Activated CD4-positive, alpha-beta memory T cell treated with anti-CD3 and anti-CD28 coated beads for 36 hours (primary cell): ENCODE measurements at regions of chr3 and their contacts with region 1.

Region 1: GRCh38 chr3:130746246-130747039 is at the start of gene PIK3R4:
- DNase-seq: peak; percentile 96
- H3K4me3 Mint-ChIP-seq: peak within 1 kb of the TSS; percentile 81
- H3K27ac Mint-ChIP-seq: peak within 1 kb of the TSS; percentile 90
- H3K4me1 Mint-ChIP-seq: peaks cover 52% of the 10 kb centered on the region
- H3K27me3 Mint-ChIP-seq: no peaks in the 10 kb centered on the region
- total RNA-seq, gene PIK3R4: 28.3 to 28.5 TPM

Region 2: GRCh38 chr3:130111185-130111864 is 635.1 kb before region 1 on chr3:
- CTCF ChIA-PET with region 1: no interaction called
- POLR2A ChIA-PET with region 1: no interaction called
- intact Hi-C with region 1: loop called (anchors 1 kb)
- DNase-seq: peak; percentile 99
- H3K4me3 Mint-ChIP-seq: peak overlapping the region; percentile 89
- H3K27ac Mint-ChIP-seq: peak overlapping the region; percentile 96
- H3K4me1 Mint-ChIP-seq: peaks cover 20% of the 10 kb centered on the region
- H3K27me3 Mint-ChIP-seq: no peaks in the 10 kb centered on the region

Region 3: GRCh38 chr3:130725746-130726145 is 20.7 kb before region 1 on chr3:
- CTCF ChIA-PET with region 1: no interaction called
- POLR2A ChIA-PET with region 1: no interaction called
- intact Hi-C with region 1: loop called (anchors 1 kb)
- DNase-seq: no peak
- H3K4me3 Mint-ChIP-seq: no peak overlapping the region
- H3K27ac Mint-ChIP-seq: no peak overlapping the region
- H3K4me1 Mint-ChIP-seq: peaks cover 6% of the 10 kb centered on the region
- H3K27me3 Mint-ChIP-seq: no peaks in the 10 kb centered on the region

Region 4: GRCh38 chr3:130850044-130850797 is 103.8 kb after region 1 on chr3:
- CTCF ChIA-PET with region 1: no interaction called
- POLR2A ChIA-PET with region 1: no interaction called
- intact Hi-C with region 1: loop called (anchors 1 kb)
- DNase-seq: peak; percentile 76
- H3K4me3 Mint-ChIP-seq: peak overlapping the region; percentile 21
- H3K27ac Mint-ChIP-seq: peak overlapping the region; percentile 57
- H3K4me1 Mint-ChIP-seq: peaks cover 28% of the 10 kb centered on the region
- H3K27me3 Mint-ChIP-seq: peaks cover 36% of the 10 kb centered on the region

Region 5: GRCh38 chr3:131026321-131027178 is 280.1 kb after region 1 on chr3 and contains the starts of genes ASTE1 and NEK11:
- CTCF ChIA-PET with region 1: interaction called, 3 read pairs
- POLR2A ChIA-PET with region 1: no interaction called
- intact Hi-C with region 1: loop called (anchors 1 kb)
- DNase-seq: peak; percentile 94
- H3K4me3 Mint-ChIP-seq: peak within 1 kb of the TSS; percentile 84
- H3K27ac Mint-ChIP-seq: peak within 1 kb of the TSS; percentile 90
- H3K4me1 Mint-ChIP-seq: peaks cover 41% of the 10 kb centered on the region
- H3K27me3 Mint-ChIP-seq: no peaks in the 10 kb centered on the region
- total RNA-seq, gene ASTE1: 7.8 to 10.1 TPM
- total RNA-seq, gene NEK11: 1.2 to 1.3 TPM

Region 6: DNA sequence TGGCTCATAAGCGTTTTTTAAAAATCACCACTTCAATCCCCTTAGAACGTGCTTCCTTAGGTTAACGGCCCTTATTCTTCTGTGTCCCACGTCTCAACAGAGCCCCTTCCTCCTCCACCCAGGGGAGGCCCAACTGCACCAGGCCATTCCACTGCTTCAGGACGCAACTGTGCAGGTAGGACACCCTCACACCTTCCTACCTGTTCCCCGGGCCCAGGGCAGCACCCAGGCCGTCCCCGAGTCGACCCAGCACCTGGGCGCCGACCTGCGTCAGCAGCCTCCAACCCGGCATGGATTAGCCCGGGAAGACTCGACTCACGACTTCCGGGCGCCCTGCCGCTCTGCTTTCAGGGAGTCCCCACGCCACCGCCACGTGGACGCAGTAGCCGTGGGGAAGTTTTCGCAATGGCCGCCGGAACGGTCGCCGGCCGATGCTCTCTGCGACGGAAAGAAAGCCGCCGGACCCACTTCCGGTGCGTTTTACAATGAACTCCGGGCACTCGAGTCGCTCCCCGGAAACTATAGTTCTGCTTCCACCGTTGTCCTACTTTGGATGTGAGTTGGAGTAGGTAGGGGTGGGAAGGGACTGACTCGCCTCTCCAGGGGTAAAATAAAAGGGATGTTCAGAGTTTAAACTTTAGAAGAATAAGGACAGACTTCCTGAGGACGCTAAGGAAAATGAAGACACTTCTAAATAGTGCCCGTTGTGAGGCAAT is 756.2 kb after region 1 on chr3 and contains the start of gene MRPL3:
- CTCF ChIA-PET with region 1: no interaction called
- POLR2A ChIA-PET with region 1: no interaction called
- intact Hi-C with region 1: loop called (anchors 2 kb)
- DNase-seq: peak; percentile 91
- H3K4me3 Mint-ChIP-seq: peak within 1 kb of the TSS; percentile 99
- H3K27ac Mint-ChIP-seq: peak within 1 kb of the TSS; percentile 90
- H3K4me1 Mint-ChIP-seq: peaks cover 32% of the 10 kb centered on the region
- H3K27me3 Mint-ChIP-seq: no peaks in the 10 kb centered on the region
- total RNA-seq, gene MRPL3: 145 to 146 TPM